Right ventricle myocardium superior (tissue), 1 donor: ENCODE measurements at regions of chr4 and their contacts with region 1.

Region 1: GRCh38 chr4:79042079-79042674 is 102.9 kb upstream of the PAQR3 start:
- DNase-seq: no peak
- ATAC-seq: peak; percentile 80

Region 2: DNA sequence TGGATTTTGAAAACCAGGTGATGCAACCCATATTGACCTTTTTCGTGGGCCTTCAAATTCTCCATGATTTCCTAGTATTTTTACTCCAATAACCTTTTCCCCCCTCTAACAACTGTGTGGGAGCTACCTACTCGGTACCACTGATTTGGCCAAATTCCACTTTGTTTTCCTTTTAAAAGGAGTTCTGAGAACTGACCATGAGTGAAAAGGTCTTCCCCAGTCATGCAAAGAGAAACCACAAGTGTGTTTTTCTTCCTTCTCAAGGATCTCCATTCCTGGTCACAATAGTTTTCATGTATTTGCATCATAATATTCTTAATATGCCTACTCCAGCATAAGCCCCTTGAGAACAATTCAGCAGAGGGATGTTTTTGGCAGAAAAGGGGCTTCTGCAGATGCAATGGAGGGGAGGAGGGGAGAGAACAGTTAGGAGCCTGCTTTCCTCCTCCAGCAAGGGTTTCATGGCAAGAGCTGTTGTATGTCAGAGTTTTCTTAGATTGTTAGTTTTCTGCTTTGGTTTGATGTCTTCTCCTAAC is 685.9 kb before region 1 on chr4:
- intact Hi-C with region 1: no loop called
- DNase-seq: no peak
- ATAC-seq: no peak

Region 3: GRCh38 chr4:79576429-79576753 is 534.2 kb after region 1 on chr4:
- intact Hi-C with region 1: loop called (anchors 5 kb)
- DNase-seq: no peak
- ATAC-seq: peak; percentile 79

Region 4: GRCh38 chr4:80221161-80221560 is 1179.0 kb after region 1 on chr4:
- intact Hi-C with region 1: loop called (anchors 10 kb)
- DNase-seq: no peak
- ATAC-seq: no peak